Activated T-helper 2 cell treated with anti-CD3 and anti-CD28 coated beads, Interferon-gamma antibody, Interleukin-2, Interleukin-4, amounts not matched to agents 10 μg/mL and 5 μg/mL and 100 μg/mL, durations not matched to agents 14 hours and 24 hours and 36 hours (primary cell): ENCODE measurements at regions of chr14 and their contacts with region 1.

Region 1: GRCh38 chr14:54420013-54420809 is 21.0 kb downstream of the CNIH1 start:
- DNase-seq: no peak
- H3K4me3 Mint-ChIP-seq: no peak overlapping the region
- H3K27ac Mint-ChIP-seq: peak overlapping the region; percentile 85
- H3K4me1 Mint-ChIP-seq: peaks cover 20% of the 10 kb centered on the region
- H3K27me3 Mint-ChIP-seq: no peaks in the 10 kb centered on the region

Region 2: DNA sequence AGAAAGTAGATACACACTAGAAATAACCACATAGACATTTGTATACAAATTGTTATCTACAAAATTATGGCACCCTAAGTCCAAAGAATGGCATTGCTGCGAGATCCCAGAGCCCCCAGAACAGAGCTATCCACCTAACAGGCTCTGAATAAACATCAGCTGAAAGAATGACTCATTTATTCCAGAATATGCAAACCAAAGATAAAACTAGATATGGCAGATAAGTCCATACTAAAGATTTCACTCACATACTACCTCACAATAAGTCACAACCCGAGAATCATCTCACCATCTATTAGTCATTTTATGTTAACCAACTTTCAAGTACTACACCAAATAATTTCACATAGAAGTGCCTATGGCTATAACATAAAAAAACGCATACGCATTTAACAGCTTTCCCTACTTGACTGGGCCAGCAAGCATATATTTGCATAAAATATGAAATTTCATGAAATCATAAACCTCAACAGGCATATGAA is 15.3 kb after region 1 on chr14:
- intact Hi-C with region 1: loop called (anchors 2 kb)
- DNase-seq: no peak
- H3K4me3 Mint-ChIP-seq: peak overlapping the region; percentile 70
- H3K27ac Mint-ChIP-seq: peak overlapping the region; percentile 95
- H3K4me1 Mint-ChIP-seq: peaks cover 71% of the 10 kb centered on the region
- H3K27me3 Mint-ChIP-seq: no peaks in the 10 kb centered on the region

Region 3: GRCh38 chr14:54509546-54510501 is 89.6 kb after region 1 on chr14 and contains the start of gene CGRRF1:
- intact Hi-C with region 1: no loop called
- DNase-seq: peak; percentile 94
- H3K4me3 Mint-ChIP-seq: peak within 1 kb of the TSS; percentile 88
- H3K27ac Mint-ChIP-seq: peak within 1 kb of the TSS; percentile 67
- H3K4me1 Mint-ChIP-seq: peaks cover 25% of the 10 kb centered on the region
- H3K27me3 Mint-ChIP-seq: peaks cover 6% of the 10 kb centered on the region
- total RNA-seq, gene CGRRF1: 6.2 and 9.1 TPM in 2 replicates